Adrenal gland (tissue), 19 donors: ENCODE measurements at regions of chr16 and their contacts with region 1.

Region 1: GRCh38 chr16:24555346-24555877 is 16.0 kb downstream of the RBBP6 start:
- DNase-seq: no peak
- H3K4me3 ChIP-seq: no peak overlapping the region
- H3K27ac ChIP-seq: peak overlapping the region in 1 of 5 donors; percentile 12
- H3K4me1 ChIP-seq: peaks cover 3 to 18% of the 10 kb centered on the region in 2 donors
- H3K27me3 ChIP-seq: no peaks in the 10 kb centered on the region
- CTCF ChIP-seq: no peak
- POLR2A ChIP-seq: no peak

Region 2: GRCh38 chr16:24829153-24829552 is 273.7 kb after region 1 on chr16:
- intact Hi-C with region 1: loop called in 1 of 2 experiments (anchors 5 kb)
- DNase-seq: peak in 1 of 7 donors; percentile 43
- H3K4me3 ChIP-seq: no peak overlapping the region
- H3K27ac ChIP-seq: no peak overlapping the region
- H3K4me1 ChIP-seq: no peaks in the 10 kb centered on the region
- H3K27me3 ChIP-seq: no peaks in the 10 kb centered on the region
- CTCF ChIP-seq: no peak
- POLR2A ChIP-seq: no peak